Panc1 (cell line): ENCODE measurements at regions of chr13 and their contacts with region 1.

Region 1: GRCh38 chr13:110756219-110756631 is 42.7 kb downstream of the ING1 start:
- DNase-seq: no peak
- ATAC-seq: no peak
- H3K4me3 ChIP-seq: no peak overlapping the region
- H3K27ac ChIP-seq: no peak overlapping the region
- H3K4me1 ChIP-seq: no peaks in the 10 kb centered on the region
- H3K27me3 ChIP-seq: no peaks in the 10 kb centered on the region
- CTCF ChIP-seq: no peak

Region 2: DNA sequence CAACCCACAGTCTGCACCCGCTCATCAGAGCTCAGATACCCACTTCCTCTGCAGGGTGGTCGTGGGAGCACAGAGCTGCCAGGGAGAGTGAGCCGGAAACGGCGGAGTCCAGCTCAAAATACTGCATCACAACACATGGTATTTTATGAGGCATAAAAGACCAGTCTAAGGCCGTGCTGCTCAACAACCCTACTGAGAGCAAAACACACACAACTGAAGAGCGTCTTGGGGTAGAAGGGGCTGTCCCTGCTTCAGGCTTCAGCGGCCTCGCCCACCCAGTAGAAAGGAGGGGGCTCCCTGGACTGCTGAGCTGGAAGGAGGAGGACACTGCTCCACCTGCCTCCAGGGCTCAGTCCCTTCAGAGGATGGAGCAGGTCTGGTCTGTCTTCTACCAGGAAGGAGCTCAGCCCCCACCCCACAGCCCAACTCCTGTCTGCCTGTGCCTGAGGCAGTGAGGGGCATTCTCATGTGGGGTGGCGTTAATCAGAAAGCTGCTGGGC is 103.9 kb before region 1 on chr13:
- CTCF ChIA-PET with region 1: no interaction called
- POLR2A ChIA-PET with region 1: no interaction called
- in situ Hi-C with region 1: no loop called
- intact Hi-C with region 1: no loop called
- DNase-seq: no peak
- ATAC-seq: no peak
- H3K4me3 ChIP-seq: no peak overlapping the region
- H3K27ac ChIP-seq: no peak overlapping the region
- H3K4me1 ChIP-seq: no peaks in the 10 kb centered on the region
- H3K27me3 ChIP-seq: no peaks in the 10 kb centered on the region
- CTCF ChIP-seq: no peak

Region 3: DNA sequence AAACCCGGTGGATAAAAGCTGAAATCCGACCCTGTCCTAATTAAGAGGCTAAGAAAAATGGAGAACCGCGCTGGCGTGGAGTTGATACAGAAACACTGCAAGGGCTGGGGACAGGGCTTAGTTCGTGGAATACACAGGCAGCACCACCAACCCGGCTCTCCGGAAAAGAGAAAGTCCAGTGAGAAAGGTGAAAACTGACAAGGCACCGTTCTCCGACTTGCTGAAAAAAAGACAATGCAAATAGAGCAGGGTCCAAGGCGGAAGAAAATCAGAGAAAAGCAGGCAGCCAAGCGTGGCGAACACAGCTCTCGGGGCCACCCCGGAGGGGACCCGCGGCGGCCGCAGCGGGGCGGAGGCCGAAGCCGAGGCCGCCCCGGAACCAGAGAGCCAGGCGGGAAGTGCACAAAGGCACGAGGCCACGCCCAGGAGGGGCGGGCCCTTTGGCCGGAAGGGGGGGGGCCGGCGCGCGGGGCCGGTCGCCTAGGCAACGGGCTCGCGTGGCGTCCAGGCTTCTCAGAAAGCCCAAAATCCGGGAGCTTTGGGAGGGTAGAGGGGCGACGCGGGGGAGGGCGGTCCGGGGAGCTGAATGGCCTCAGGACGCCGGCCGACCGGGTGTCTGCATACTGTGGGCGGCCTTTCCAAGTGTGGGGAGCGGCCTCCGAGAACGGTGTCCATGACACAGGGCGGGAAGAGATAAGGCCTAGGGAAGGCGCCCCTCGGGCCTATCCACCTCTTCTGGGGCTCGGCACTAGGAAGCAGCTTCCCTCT is 44.0 kb before region 1 on chr13:
- CTCF ChIA-PET with region 1: no interaction called
- POLR2A ChIA-PET with region 1: interaction called, 15 read pairs
- in situ Hi-C with region 1: no loop called
- intact Hi-C with region 1: no loop called
- DNase-seq: no peak
- ATAC-seq: peak; percentile 59
- H3K4me3 ChIP-seq: peak overlapping the region; percentile 74 to 81
- H3K27ac ChIP-seq: peak overlapping the region; percentile 98
- H3K4me1 ChIP-seq: no peaks in the 10 kb centered on the region; the same call in 1 of the 2 replicates
- H3K27me3 ChIP-seq: no peaks in the 10 kb centered on the region
- CTCF ChIP-seq: no peak

Region 4: GRCh38 chr13:110831447-110832204 is 75.4 kb after region 1 on chr13:
- CTCF ChIA-PET with region 1: no interaction called
- POLR2A ChIA-PET with region 1: no interaction called
- in situ Hi-C with region 1: no loop called
- intact Hi-C with region 1: loop called (anchors 2 kb)
- DNase-seq: no peak
- ATAC-seq: no peak
- H3K4me3 ChIP-seq: no peak overlapping the region
- H3K27ac ChIP-seq: no peak overlapping the region
- H3K4me1 ChIP-seq: no peaks in the 10 kb centered on the region
- H3K27me3 ChIP-seq: no peaks in the 10 kb centered on the region
- CTCF ChIP-seq: no peak